T-cell (primary cell): ENCODE measurements at regions of chr10 and their contacts with region 1.

Region 1: DNA sequence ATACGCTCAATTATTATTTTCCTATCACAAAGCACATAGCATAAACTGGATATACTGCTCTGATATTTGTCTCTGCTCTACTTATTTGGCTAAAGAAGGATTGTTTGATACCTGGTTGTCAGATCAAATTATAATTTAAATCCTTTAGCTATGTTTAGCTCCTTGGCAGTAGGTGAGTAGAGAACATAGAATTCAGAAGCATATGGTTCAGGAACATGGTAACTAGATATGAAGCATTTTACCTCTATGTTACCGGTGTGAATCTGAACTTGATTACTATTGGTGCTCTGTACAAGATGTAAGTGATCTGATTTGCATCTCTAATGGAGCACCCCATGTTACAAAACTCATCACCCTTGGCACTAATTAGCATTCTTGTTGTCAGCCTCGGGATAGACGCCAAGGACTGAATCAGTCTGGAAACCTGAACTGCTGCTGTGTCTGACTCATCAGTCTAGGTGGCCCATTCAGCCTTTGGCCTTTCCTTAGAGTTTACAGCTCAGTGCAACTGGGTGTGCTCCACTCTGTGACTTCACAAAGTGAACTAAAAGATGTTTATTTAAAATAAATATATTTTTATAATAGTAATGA is 12.3 kb upstream of the MYPN start:
- DNase-seq: no peak
- ATAC-seq: no peak
- H3K4me3 ChIP-seq: no peak overlapping the region
- H3K4me3 Mint-ChIP-seq: no peak overlapping the region
- H3K27ac ChIP-seq: no peak overlapping the region
- H3K27ac Mint-ChIP-seq: no peak overlapping the region
- H3K4me1 ChIP-seq: no peaks in the 10 kb centered on the region
- H3K4me1 Mint-ChIP-seq: peaks cover 0 to 2% (median 0%) of the 10 kb centered on the region in 3 donors
- H3K27me3 ChIP-seq: no peaks in the 10 kb centered on the region
- H3K27me3 Mint-ChIP-seq: no peaks in the 10 kb centered on the region

Region 2: GRCh38 chr10:67959839-67960476 is 137.1 kb before region 1 on chr10:
- CTCF ChIA-PET with region 1: no interaction called
- POLR2A ChIA-PET with region 1: no interaction called
- DNase-seq: no peak
- ATAC-seq: no peak
- H3K4me3 ChIP-seq: no peak overlapping the region
- H3K4me3 Mint-ChIP-seq: no peak overlapping the region
- H3K27ac ChIP-seq: no peak overlapping the region
- H3K27ac Mint-ChIP-seq: no peak overlapping the region
- H3K4me1 ChIP-seq: no peaks in the 10 kb centered on the region
- H3K4me1 Mint-ChIP-seq: no peaks in the 10 kb centered on the region
- H3K27me3 ChIP-seq: no peaks in the 10 kb centered on the region
- H3K27me3 Mint-ChIP-seq: no peaks in the 10 kb centered on the region

Region 3: GRCh38 chr10:68074775-68075549 is 22.0 kb before region 1 on chr10 and contains the start of gene HERC4:
- CTCF ChIA-PET with region 1: no interaction called
- POLR2A ChIA-PET with region 1: interaction called in 1 of 2 experiments, 18 read pairs
- DNase-seq: peak; percentile 80 to 95 (median 88)
- ATAC-seq: peak; percentile 91 to 93 (median 92)
- H3K4me3 ChIP-seq: peak within 1 kb of the TSS; percentile 94 to 100
- H3K4me3 Mint-ChIP-seq: peak within 1 kb of the TSS; percentile 96 to 97 (median 96)
- H3K27ac ChIP-seq: peak within 1 kb of the TSS; percentile 96
- H3K27ac Mint-ChIP-seq: peak within 1 kb of the TSS; percentile 91 to 93
- H3K4me1 ChIP-seq: peaks cover 11 to 27% of the 10 kb centered on the region in 2 experiments
- H3K4me1 Mint-ChIP-seq: peaks cover 37 to 41% (median 38%) of the 10 kb centered on the region in 3 donors
- H3K27me3 ChIP-seq: peaks cover 0 to 8% of the 10 kb centered on the region in 2 experiments
- H3K27me3 Mint-ChIP-seq: no peaks in the 10 kb centered on the region
- total RNA-seq, gene HERC4: 63.0 to 81.6 (median 77.5) TPM

Region 4: GRCh38 chr10:68110027-68110426 is 13.0 kb after region 1 on chr10:
- CTCF ChIA-PET with region 1: no interaction called
- POLR2A ChIA-PET with region 1: interaction called, 5 to 10 read pairs
- DNase-seq: no peak
- ATAC-seq: no peak
- H3K4me3 ChIP-seq: no peak overlapping the region
- H3K4me3 Mint-ChIP-seq: no peak overlapping the region
- H3K27ac ChIP-seq: no peak overlapping the region
- H3K27ac Mint-ChIP-seq: no peak overlapping the region
- H3K4me1 ChIP-seq: no peaks in the 10 kb centered on the region
- H3K4me1 Mint-ChIP-seq: no peaks in the 10 kb centered on the region
- H3K27me3 ChIP-seq: peaks cover 0 to 3% of the 10 kb centered on the region in 2 experiments
- H3K27me3 Mint-ChIP-seq: peaks cover 0 to 7% of the 10 kb centered on the region in 2 donors